Activated B cell treated with CpG ODN at 0.5 μM for 24 hours (primary cell): ENCODE measurements at regions of chrX and their contacts with region 1.

Region 1: DNA sequence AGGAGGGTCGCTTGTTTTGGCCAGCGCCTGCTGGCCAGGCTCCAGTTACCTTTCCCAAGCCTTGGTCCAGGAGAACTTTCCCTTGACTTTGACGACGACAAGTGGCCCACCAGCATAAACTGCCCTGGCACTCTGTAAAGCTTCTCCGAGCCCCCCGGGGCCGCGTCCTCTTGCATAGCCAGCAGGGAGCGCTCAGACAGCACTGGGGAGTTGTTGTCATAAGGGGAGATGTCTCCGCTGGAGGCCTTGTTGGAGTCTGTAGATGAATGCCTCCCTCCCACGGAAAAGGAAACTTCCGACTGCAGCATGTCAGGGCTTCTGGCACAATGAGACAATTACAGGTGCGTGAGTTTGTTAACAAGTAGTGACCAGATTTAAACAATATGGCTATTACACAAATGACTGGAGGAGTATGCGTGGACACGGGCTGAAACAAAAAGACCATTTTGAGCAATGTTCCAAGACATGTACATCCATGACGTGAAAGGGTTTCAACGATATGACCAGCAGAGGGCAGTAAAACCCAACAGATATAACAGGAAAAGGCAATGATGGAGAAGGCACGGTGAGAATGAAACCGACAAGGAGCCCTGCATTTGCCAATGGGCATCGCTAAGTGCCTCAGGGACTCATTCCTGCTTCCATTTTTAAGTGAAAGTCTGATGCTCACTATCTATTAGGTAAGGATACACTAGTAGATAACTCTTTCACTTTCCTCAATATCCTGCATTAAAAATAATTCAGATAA is 33.0 kb downstream of the HCCS start:
- DNase-seq: no peak
- ATAC-seq: peak; percentile 65
- H3K4me3 Mint-ChIP-seq: no peak overlapping the region
- H3K27ac Mint-ChIP-seq: no peak overlapping the region
- H3K4me1 Mint-ChIP-seq: peaks cover 2% of the 10 kb centered on the region
- H3K27me3 Mint-ChIP-seq: no peaks in the 10 kb centered on the region
- CTCF ChIP-seq: no peak

Region 2: GRCh38 chrX:10939384-10939897 is 204.7 kb before region 1 on chrX:
- CTCF ChIA-PET with region 1: no interaction called
- POLR2A ChIA-PET with region 1: no interaction called
- intact Hi-C with region 1: no loop called
- DNase-seq: no peak
- ATAC-seq: no peak
- H3K4me3 Mint-ChIP-seq: no peak overlapping the region
- H3K27ac Mint-ChIP-seq: no peak overlapping the region
- H3K4me1 Mint-ChIP-seq: no peaks in the 10 kb centered on the region
- H3K27me3 Mint-ChIP-seq: no peaks in the 10 kb centered on the region
- CTCF ChIP-seq: no peak

Region 3: DNA sequence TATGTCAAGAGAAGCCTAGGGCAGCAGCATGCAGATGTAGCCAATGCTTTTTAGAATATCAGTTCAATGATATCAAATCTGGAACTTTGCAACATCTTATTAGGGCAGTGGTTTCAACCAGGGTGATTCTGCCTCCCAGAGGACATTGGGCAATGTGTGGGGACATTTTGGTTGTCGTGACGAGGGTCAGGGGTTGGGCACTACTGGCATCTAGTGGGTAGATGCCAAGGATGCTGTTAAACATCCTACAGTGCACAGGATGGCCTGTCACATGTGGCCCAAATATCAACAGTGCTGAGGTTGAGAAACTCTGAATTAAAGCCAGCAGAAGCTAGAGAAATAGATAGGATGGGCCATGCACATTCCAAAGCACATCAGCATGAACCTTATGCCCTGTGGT is 301.4 kb after region 1 on chrX:
- CTCF ChIA-PET with region 1: no interaction called
- POLR2A ChIA-PET with region 1: no interaction called
- intact Hi-C with region 1: loop called (anchors 1 kb)
- DNase-seq: no peak
- ATAC-seq: no peak
- H3K4me3 Mint-ChIP-seq: no peak overlapping the region
- H3K27ac Mint-ChIP-seq: no peak overlapping the region
- H3K4me1 Mint-ChIP-seq: no peaks in the 10 kb centered on the region
- H3K27me3 Mint-ChIP-seq: no peaks in the 10 kb centered on the region
- CTCF ChIP-seq: no peak

Region 4: DNA sequence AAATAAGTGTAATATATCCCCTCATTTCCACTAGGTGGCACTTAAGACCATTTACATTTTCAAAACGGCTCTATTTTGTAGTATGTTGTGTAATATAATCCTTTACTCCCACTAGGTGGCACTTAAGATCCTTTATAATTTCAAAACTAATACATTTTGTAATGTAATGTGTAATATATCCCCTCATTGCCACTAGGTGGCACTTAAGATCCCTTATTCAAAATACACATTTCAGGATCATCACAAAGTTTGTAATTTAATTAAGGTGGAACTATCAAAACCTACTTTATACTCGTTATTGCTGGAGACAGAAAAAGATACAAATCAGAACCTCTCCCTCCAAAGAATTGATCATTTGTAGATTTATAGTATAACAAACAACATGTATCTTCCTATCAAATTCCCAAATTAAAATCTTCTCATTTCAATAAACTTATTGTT is 389.1 kb after region 1 on chrX:
- CTCF ChIA-PET with region 1: interaction called, 3 read pairs
- POLR2A ChIA-PET with region 1: no interaction called
- intact Hi-C with region 1: loop called (anchors 1 kb)
- DNase-seq: no peak
- ATAC-seq: peak; percentile 99
- H3K4me3 Mint-ChIP-seq: no peak overlapping the region
- H3K27ac Mint-ChIP-seq: no peak overlapping the region
- H3K4me1 Mint-ChIP-seq: peaks cover 3% of the 10 kb centered on the region
- H3K27me3 Mint-ChIP-seq: no peaks in the 10 kb centered on the region
- CTCF ChIP-seq: peak; percentile 44

Region 5: DNA sequence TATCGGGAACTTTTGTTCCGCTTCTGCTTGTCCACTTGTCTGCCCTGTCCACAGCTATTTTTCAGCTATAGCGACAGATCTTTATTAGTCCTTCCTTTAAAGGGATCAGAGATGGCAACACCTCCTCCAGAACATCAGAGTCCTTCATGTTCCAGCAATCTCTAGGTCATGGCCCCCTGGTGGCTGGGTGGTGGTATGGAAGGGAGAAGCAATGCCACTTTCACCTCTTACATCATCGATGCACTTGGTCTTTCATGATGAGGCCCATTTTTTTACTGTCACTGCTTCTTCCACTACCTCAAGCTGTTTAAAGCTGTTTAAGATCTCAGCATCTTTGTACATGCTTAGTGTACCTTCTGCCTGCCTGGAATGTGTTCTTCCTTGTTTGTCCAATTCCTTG is 414.9 kb after region 1 on chrX:
- CTCF ChIA-PET with region 1: no interaction called
- POLR2A ChIA-PET with region 1: no interaction called
- intact Hi-C with region 1: loop called (anchors 1 kb)
- DNase-seq: peak; percentile 18
- ATAC-seq: peak; percentile 69
- H3K4me3 Mint-ChIP-seq: no peak overlapping the region
- H3K27ac Mint-ChIP-seq: no peak overlapping the region
- H3K4me1 Mint-ChIP-seq: no peaks in the 10 kb centered on the region
- H3K27me3 Mint-ChIP-seq: peaks cover 5% of the 10 kb centered on the region
- CTCF ChIP-seq: no peak

Region 6: DNA sequence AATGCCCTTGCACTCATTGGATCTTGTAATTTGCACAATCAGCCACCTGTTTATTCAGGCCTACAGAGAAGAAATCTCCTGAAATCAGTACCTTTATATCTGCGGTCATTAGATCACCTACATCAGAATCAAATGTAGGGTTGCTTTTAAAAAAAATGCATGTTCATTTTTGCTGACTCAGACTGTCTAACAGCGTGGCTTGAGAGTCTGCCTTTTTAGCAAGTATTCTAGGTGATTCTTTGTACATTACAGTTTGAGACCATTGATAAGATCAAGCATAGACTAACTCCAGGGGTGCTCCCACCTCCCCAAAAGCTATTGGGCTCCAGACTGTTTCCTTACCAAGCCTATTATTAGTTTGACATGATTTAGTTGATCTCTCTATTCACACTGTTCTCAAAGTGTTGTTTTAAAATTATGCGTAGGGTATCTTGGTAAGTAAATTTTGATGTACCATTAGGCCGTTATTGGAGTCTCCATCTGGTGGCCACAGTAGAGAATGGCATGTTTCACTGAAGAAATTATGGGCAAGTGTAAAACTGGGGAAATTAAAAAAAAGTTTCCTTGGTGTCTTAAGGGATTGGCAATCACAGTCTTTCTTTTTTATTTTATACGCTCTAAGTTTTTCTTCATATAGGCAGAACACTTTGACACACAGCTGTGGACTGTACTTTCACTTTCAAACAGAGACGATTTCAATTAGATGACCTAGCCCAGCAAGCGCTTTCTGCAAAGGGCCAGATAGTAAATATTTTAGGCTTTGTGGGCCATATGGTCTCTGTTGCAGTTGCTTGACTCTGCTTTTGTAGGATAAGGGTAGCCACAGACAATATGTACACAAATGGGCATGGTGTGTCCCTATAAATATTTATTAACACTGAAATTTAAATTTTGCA is 580.3 kb after region 1 on chrX:
- CTCF ChIA-PET with region 1: no interaction called
- POLR2A ChIA-PET with region 1: no interaction called
- intact Hi-C with region 1: loop called (anchors 1 kb)
- DNase-seq: no peak
- ATAC-seq: no peak
- H3K4me3 Mint-ChIP-seq: no peak overlapping the region
- H3K27ac Mint-ChIP-seq: no peak overlapping the region
- H3K4me1 Mint-ChIP-seq: no peaks in the 10 kb centered on the region
- H3K27me3 Mint-ChIP-seq: no peaks in the 10 kb centered on the region
- CTCF ChIP-seq: peak; percentile 21

Region 7: GRCh38 chrX:12771445-12772069 is 1627.5 kb after region 1 on chrX:
- CTCF ChIA-PET with region 1: no interaction called
- POLR2A ChIA-PET with region 1: no interaction called
- intact Hi-C with region 1: loop called (anchors 10 kb)
- DNase-seq: peak; percentile 53
- ATAC-seq: peak; percentile 100
- H3K4me3 Mint-ChIP-seq: no peak overlapping the region
- H3K27ac Mint-ChIP-seq: no peak overlapping the region
- H3K4me1 Mint-ChIP-seq: peaks cover 9% of the 10 kb centered on the region
- H3K27me3 Mint-ChIP-seq: no peaks in the 10 kb centered on the region
- CTCF ChIP-seq: no peak